Activated CD4-positive, alpha-beta memory T cell treated with anti-CD3 and anti-CD28 coated beads, Interleukin-2, amount 10 ng/mL, durations not matched to agents 7 days and 5 days (primary cell): ENCODE measurements at regions of chr1 and their contacts with region 1.

Region 1: DNA sequence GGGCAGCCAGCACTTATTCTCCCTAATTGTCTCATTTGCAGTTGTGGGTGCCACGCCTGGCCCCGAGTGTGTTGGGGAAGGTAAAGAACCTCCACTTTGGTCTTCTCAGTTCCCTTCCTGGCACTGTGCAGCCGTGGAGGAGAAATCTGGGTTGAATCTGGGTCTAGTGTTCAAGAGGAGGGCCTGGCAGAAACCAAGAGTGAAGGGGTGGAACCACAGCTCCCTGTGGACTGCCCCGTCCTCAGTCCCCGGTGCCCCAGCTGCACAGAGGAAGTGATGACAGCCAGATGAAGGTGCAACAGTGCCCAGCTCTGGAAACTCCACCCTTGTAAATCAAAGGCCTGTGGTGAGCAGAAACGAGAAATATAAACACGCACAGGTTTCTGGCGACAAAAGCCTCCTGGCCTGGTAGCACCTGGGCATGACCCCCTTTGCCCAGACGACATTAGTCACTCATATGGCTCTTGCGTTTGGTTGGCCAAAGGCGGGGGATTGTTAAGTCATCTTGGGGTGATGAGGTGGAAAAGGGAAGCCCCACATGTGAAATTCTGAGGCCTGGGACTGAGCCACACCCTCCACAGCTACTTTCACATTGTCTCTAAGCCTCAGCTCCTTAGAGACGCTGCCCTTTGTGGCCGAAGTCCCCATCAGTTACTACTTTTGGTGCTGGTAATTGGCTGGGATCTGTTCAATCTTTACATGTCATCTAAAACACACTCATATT is 4.2 kb upstream of the ECE1 start:
- DNase-seq: peak; percentile 89
- H3K4me3 Mint-ChIP-seq: peak overlapping the region; percentile 79
- H3K27ac Mint-ChIP-seq: peak overlapping the region; percentile 98
- H3K4me1 Mint-ChIP-seq: peaks cover 85% of the 10 kb centered on the region
- H3K27me3 Mint-ChIP-seq: no peaks in the 10 kb centered on the region

Region 2: DNA sequence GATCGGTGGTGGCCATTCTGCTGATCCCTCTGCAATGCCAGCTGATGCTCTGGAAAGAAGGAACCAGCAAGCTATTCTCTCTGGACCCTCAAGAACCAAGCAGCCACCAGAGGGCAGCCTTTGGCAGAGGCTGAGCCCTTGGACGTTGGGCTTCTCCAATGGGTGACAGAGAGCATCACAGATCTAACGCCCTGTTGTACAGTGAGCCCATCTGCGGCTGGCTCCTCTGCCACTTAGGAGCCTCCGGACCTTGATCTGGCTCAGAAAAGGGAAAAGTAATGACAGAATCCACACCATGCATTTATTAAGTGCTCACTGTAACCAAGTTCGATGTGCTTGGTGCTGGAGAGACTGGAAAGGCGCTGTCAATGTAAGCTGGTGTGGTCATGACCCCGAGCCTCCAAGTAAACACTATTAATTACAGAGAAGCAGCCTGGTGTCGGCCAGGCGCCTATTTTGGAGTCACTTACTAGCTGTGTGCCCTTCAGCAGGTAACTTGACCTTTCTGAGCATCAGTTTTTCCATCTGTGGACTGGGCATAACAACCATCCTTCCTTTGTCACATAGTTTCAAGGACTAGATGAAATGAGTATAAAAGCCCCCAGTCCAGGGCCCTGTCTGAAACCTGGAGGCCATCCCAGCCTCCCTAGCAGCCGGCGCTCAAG is 39.0 kb before region 1 on chr1:
- CTCF ChIA-PET with region 1: interaction called, 11 read pairs
- POLR2A ChIA-PET with region 1: interaction called, 28 read pairs
- DNase-seq: peak; percentile 85
- H3K4me3 Mint-ChIP-seq: no peak overlapping the region
- H3K27ac Mint-ChIP-seq: peak overlapping the region; percentile 17
- H3K4me1 Mint-ChIP-seq: peaks cover 40% of the 10 kb centered on the region
- H3K27me3 Mint-ChIP-seq: no peaks in the 10 kb centered on the region

Region 3: DNA sequence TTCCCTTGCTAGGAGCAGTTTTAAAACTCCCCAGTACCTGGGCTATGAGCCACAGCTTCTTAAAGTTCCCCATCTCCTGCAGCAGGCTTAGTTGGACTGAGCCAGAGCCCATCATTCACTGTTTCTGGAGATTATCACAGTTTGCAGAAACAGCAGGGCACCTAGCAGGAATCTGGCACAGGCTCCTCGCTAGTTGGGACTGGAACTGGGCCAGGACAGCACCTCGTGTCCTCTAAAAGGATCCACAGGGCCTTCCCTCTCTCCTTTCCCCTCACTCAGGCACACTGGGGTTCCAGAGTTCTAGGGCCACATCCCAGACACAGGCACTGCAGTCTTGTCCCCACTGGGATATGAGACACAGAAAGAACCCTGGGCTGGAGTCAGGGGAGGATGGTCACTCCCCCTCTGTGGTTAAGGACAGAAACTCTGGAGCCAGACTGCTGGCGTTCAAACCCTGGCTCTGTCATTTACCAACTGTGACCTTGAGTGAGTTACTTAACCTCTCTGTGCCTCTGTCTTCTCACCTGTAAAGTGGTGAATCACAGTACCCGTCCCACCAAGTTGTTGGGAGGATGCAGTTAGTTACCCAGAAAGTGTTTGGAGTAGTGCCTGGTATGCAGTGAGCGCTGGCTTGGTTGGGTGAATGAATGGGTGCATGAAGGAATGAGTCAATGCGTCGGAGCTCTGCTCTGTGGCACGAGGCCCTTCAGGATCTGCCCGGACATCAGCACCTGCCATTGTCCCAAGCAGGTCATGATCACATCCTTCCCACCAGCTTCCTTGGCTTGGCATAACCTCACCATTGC is 14.6 kb after region 1 on chr1:
- CTCF ChIA-PET with region 1: no interaction called
- POLR2A ChIA-PET with region 1: interaction called, 19 read pairs
- DNase-seq: no peak
- H3K4me3 Mint-ChIP-seq: no peak overlapping the region
- H3K27ac Mint-ChIP-seq: peak overlapping the region; percentile 26
- H3K4me1 Mint-ChIP-seq: peaks cover 43% of the 10 kb centered on the region
- H3K27me3 Mint-ChIP-seq: no peaks in the 10 kb centered on the region

Region 4: GRCh38 chr1:21334214-21335087 is 40.0 kb after region 1 on chr1:
- CTCF ChIA-PET with region 1: interaction called, 45 read pairs
- POLR2A ChIA-PET with region 1: interaction called, 92 read pairs
- DNase-seq: peak; percentile 89
- H3K4me3 Mint-ChIP-seq: peak overlapping the region; percentile 73
- H3K27ac Mint-ChIP-seq: peak overlapping the region; percentile 94
- H3K4me1 Mint-ChIP-seq: peaks cover 89% of the 10 kb centered on the region
- H3K27me3 Mint-ChIP-seq: no peaks in the 10 kb centered on the region